Activated CD4-positive, alpha-beta memory T cell treated with anti-CD3 and anti-CD28 coated beads, Interleukin-2, amount 10 ng/mL, durations not matched to agents 7 days and 5 days (primary cell): ENCODE measurements at regions of chr22 and their contacts with region 1.

Region 1: GRCh38 chr22:37965940-37966664 is 12.6 kb downstream of the POLR2F start:
- DNase-seq: no peak
- H3K4me3 Mint-ChIP-seq: no peak overlapping the region
- H3K27ac Mint-ChIP-seq: no peak overlapping the region
- H3K4me1 Mint-ChIP-seq: peaks cover 2% of the 10 kb centered on the region
- H3K27me3 Mint-ChIP-seq: no peaks in the 10 kb centered on the region

Region 2: GRCh38 chr22:37953437-37954179 is 12.5 kb before region 1 on chr22 and contains the starts of genes C22orf23 and POLR2F:
- CTCF ChIA-PET with region 1: interaction called, 21 read pairs
- POLR2A ChIA-PET with region 1: interaction called, 3 read pairs
- DNase-seq: peak; percentile 97
- H3K4me3 Mint-ChIP-seq: peak within 1 kb of the TSS; percentile 99
- H3K27ac Mint-ChIP-seq: peak within 1 kb of the TSS; percentile 82
- H3K4me1 Mint-ChIP-seq: peaks cover 36% of the 10 kb centered on the region
- H3K27me3 Mint-ChIP-seq: peaks cover 16% of the 10 kb centered on the region
- total RNA-seq, gene C22orf23: not detected
- total RNA-seq, gene POLR2F: 50.1 to 56.4 TPM